WTC11 (cell line): ENCODE measurements at regions of chr6 and their contacts with region 1.

Region 1: GRCh38 chr6:36851149-36851614 is 11.9 kb upstream of the CPNE5 start:
- DNase-seq: peak; percentile 50
- ATAC-seq: peak; percentile 9; the same call in 1 of the 2 replicates
- H3K4me3 Mint-ChIP-seq: no peak overlapping the region
- H3K27ac Mint-ChIP-seq: no peak overlapping the region; the same call in 1 of the 2 replicates
- H3K4me1 Mint-ChIP-seq: peaks cover 33% of the 10 kb centered on the region
- H3K27me3 Mint-ChIP-seq: no peaks in the 10 kb centered on the region; the same call in none of the 2 replicates
- CTCF ChIP-seq: peak; percentile 75

Region 2: GRCh38 chr6:36759148-36759759 is 91.9 kb before region 1 on chr6:
- CTCF ChIA-PET with region 1: interaction called, 179 read pairs
- POLR2A ChIA-PET with region 1: no interaction called
- DNase-seq: peak; percentile 88
- ATAC-seq: peak; percentile 92
- H3K4me3 Mint-ChIP-seq: no peak overlapping the region
- H3K27ac Mint-ChIP-seq: 0 out of 2 replicates have a peak overlapping the region, but pooled peaks have one; percentile 5
- H3K4me1 Mint-ChIP-seq: peaks cover 15% of the 10 kb centered on the region
- H3K27me3 Mint-ChIP-seq: no peaks in the 10 kb centered on the region
- CTCF ChIP-seq: peak; percentile 99

Region 3: GRCh38 chr6:36774331-36774730 is 76.9 kb before region 1 on chr6:
- CTCF ChIA-PET with region 1: interaction called, 179 read pairs
- POLR2A ChIA-PET with region 1: interaction called, 5 read pairs
- DNase-seq: no peak
- ATAC-seq: no peak
- H3K4me3 Mint-ChIP-seq: no peak overlapping the region
- H3K27ac Mint-ChIP-seq: no peak overlapping the region
- H3K4me1 Mint-ChIP-seq: peaks cover 28% of the 10 kb centered on the region
- H3K27me3 Mint-ChIP-seq: no peaks in the 10 kb centered on the region
- CTCF ChIP-seq: no peak

Region 4: GRCh38 chr6:36793913-36794712 is 57.1 kb before region 1 on chr6:
- CTCF ChIA-PET with region 1: interaction called, 12 read pairs
- POLR2A ChIA-PET with region 1: no interaction called
- DNase-seq: no peak
- ATAC-seq: peak; percentile 69
- H3K4me3 Mint-ChIP-seq: peak overlapping the region; percentile 25; the same call in 1 of the 2 replicates
- H3K27ac Mint-ChIP-seq: peak overlapping the region; percentile 37; the same call in 1 of the 2 replicates
- H3K4me1 Mint-ChIP-seq: peaks cover 40% of the 10 kb centered on the region
- H3K27me3 Mint-ChIP-seq: no peaks in the 10 kb centered on the region
- CTCF ChIP-seq: no peak

Region 5: GRCh38 chr6:36836111-36837021 is 14.8 kb before region 1 on chr6:
- CTCF ChIA-PET with region 1: interaction called, 24 read pairs
- POLR2A ChIA-PET with region 1: interaction called, 4 read pairs
- DNase-seq: no peak
- ATAC-seq: no peak
- H3K4me3 Mint-ChIP-seq: no peak overlapping the region
- H3K27ac Mint-ChIP-seq: no peak overlapping the region
- H3K4me1 Mint-ChIP-seq: peaks cover 17% of the 10 kb centered on the region
- H3K27me3 Mint-ChIP-seq: peaks cover 60% of the 10 kb centered on the region
- CTCF ChIP-seq: no peak

Region 6: GRCh38 chr6:36885461-36886401 is 34.5 kb after region 1 on chr6 and contains the start of gene C6orf89:
- CTCF ChIA-PET with region 1: interaction called, 30 read pairs
- POLR2A ChIA-PET with region 1: no interaction called
- DNase-seq: peak; percentile 95
- ATAC-seq: peak; percentile 99
- H3K4me3 Mint-ChIP-seq: peak within 1 kb of the TSS; percentile 91
- H3K27ac Mint-ChIP-seq: peak within 1 kb of the TSS; percentile 96
- H3K4me1 Mint-ChIP-seq: peaks cover 17% of the 10 kb centered on the region
- H3K27me3 Mint-ChIP-seq: no peaks in the 10 kb centered on the region
- CTCF ChIP-seq: peak; percentile 64
- total RNA-seq, gene C6orf89: 13.2 to 15.6 TPM (median 15.0 TPM) in 3 replicates

Region 7: GRCh38 chr6:36962874-36963273 is 111.7 kb after region 1 on chr6:
- CTCF ChIA-PET with region 1: no interaction called
- POLR2A ChIA-PET with region 1: no interaction called
- DNase-seq: peak; percentile 93
- ATAC-seq: peak; percentile 76
- H3K4me3 Mint-ChIP-seq: no peak overlapping the region
- H3K27ac Mint-ChIP-seq: no peak overlapping the region; the same call in 1 of the 2 replicates
- H3K4me1 Mint-ChIP-seq: peaks cover 15% of the 10 kb centered on the region
- H3K27me3 Mint-ChIP-seq: no peaks in the 10 kb centered on the region
- CTCF ChIP-seq: no peak